PC-3 (cell line): ENCODE measurements at regions of chr7 and their contacts with region 1.

Region 1: DNA sequence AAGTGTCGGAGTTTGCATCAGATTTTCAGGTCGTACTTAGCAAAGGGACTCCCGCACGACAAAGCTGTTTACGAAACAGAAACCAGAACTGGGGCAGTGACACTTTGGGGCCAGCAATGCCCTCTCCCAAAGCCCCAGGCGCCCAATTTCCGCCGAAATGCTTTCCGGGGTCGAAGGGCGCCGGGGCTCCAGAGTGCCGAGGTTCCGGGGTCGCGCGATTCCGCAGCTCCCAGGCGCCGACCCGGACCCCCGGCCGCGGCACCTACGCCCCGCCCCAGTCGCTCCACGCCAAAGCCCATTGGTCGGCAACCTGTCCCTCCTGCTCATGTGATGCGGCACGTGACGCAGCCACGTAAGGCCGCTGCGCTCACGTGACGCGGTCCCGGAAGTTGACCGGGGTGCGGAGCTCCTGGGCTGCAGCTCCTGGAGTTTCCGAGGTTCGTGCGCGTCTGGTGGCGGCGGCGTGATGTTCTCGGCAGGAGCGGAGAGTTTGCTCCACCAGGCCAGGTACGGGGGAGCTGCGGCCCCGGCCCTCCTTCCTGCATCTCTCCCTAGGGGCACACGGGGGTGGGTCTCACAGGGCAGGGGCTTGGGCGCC is at the start of gene AP5Z1:
- DNase-seq: peak; percentile 94
- ATAC-seq: peak; percentile 93
- H3K4me3 ChIP-seq: peak within 1 kb of the TSS; percentile 100
- H3K27ac ChIP-seq: peak within 1 kb of the TSS; percentile 59
- H3K4me1 ChIP-seq: peaks cover 12% of the 10 kb centered on the region
- H3K27me3 ChIP-seq: no peaks in the 10 kb centered on the region
- CTCF ChIP-seq: no peak
- total RNA-seq, gene AP5Z1: 36.6 and 59.3 TPM in 2 replicates

Region 2: DNA sequence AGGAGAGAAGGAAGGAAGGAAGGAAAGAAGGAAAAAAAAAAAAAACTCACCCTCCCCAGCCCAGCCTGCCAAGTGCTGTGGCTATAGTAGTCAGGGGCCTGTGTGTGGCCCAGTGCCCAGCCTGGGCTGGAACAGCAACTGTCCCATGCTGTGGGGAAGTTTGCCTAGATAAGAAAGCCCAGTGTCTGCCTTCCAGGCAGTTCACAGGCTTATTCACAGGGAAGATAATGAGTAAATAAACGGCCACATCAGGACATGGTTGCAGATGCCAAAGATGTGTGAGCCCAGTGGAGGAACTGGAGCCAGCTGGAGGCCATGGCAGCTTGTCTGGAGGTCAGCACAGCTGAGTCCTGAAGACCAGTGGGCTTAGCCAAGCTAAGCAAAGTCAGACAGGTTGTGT is 225.7 kb before region 1 on chr7:
- CTCF ChIA-PET with region 1: no interaction called
- POLR2A ChIA-PET with region 1: no interaction called
- intact Hi-C with region 1: no loop called
- DNase-seq: no peak
- ATAC-seq: no peak
- H3K4me3 ChIP-seq: no peak overlapping the region
- H3K27ac ChIP-seq: no peak overlapping the region
- H3K4me1 ChIP-seq: no peaks in the 10 kb centered on the region
- H3K27me3 ChIP-seq: no peaks in the 10 kb centered on the region
- CTCF ChIP-seq: no peak

Region 3: DNA sequence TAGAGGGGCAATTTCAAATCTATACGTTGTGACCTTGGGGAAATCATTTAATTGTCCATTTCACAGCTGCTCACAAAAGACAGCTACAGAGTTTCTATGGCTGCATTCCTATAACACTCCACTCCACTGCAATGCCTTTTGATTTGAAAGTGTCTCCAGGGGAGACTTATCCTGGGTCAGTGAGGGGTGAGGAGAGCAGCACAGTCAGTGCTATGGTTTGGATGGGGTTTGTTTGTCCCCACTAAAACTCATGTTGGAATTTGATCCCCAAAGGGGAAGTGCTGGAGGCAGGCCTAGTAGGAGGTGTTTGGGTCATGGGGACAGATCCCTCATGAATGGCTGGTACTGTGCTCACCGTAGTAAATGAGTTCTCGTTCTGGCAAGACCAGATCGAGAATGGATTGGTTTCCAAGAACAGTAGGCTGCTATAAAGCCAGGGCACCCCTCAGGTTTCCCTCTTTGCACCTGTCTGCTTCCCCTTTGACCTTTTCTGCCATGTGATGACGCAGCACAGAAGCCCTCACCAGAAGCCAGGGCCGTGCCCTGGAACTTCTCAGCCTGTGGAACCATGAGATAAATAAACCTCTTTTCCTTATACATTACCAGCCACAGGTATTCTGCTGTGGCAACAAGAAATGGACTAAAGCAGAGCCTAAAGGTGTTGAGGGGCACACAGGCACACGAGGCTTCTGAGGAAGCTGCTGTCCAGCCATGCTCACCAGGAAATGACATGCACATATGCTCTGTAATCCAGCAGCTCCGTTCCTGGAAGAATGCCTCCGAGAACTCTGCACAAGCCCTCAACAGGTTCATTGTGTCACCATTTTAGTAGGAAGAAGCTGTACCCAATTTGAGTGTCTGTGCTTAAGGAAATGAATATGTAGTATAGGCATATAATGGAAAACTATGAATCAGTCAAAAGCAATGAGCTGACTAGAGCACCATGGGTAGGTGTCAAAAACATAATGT is 91.5 kb after region 1 on chr7:
- CTCF ChIA-PET with region 1: no interaction called
- POLR2A ChIA-PET with region 1: interaction called, 13 read pairs
- intact Hi-C with region 1: no loop called
- DNase-seq: no peak
- ATAC-seq: no peak
- H3K4me3 ChIP-seq: no peak overlapping the region
- H3K27ac ChIP-seq: no peak overlapping the region
- H3K4me1 ChIP-seq: no peaks in the 10 kb centered on the region
- H3K27me3 ChIP-seq: no peaks in the 10 kb centered on the region
- CTCF ChIP-seq: no peak

Region 4: DNA sequence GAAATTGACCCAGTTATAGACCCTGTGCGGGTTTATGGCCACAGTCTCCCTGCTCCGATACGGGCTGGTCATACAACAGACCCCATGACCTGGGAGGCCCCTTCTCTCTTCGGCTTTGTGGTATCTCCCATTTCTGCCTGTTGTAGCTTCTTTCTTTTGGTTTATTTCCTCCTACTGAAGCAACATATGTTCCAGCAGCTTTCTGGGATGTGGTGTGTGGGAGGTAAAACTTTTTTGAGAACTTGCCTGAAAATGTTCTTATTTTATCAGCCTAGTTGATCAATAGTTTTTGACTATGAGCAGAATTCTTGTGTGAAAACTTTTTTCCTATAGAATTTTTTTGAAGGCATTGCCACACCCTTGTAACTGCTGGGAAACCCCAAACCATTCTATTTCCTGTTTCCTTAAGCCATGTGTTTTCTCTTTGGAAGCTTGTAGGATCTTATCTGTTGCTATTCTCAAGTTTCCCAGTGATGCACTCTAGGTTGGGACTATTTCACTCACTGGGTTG is 1592.4 kb after region 1 on chr7:
- CTCF ChIA-PET with region 1: interaction called, 14 read pairs
- POLR2A ChIA-PET with region 1: no interaction called
- intact Hi-C with region 1: no loop called
- DNase-seq: peak; percentile 33
- ATAC-seq: peak; percentile 79
- H3K4me3 ChIP-seq: no peak overlapping the region
- H3K27ac ChIP-seq: peak overlapping the region; percentile 35
- H3K4me1 ChIP-seq: peaks cover 5% of the 10 kb centered on the region; the same call in 1 of the 2 replicates
- H3K27me3 ChIP-seq: no peaks in the 10 kb centered on the region
- CTCF ChIP-seq: no peak